Activated B cell treated with CpG ODN at 0.5 μM for 24 hours (primary cell): ENCODE measurements at regions of chr11 and their contacts with region 1.

Region 1: GRCh38 chr11:18768472-18768901 is 23.1 kb downstream of the PTPN5 start:
- DNase-seq: no peak
- ATAC-seq: peak; percentile 50
- H3K4me3 Mint-ChIP-seq: no peak overlapping the region
- H3K27ac Mint-ChIP-seq: no peak overlapping the region
- H3K4me1 Mint-ChIP-seq: peaks cover 7% of the 10 kb centered on the region
- H3K27me3 Mint-ChIP-seq: peaks cover 14% of the 10 kb centered on the region
- CTCF ChIP-seq: no peak

Region 2: GRCh38 chr11:17991783-17992433 is 776.6 kb before region 1 on chr11:
- CTCF ChIA-PET with region 1: no interaction called
- POLR2A ChIA-PET with region 1: no interaction called
- intact Hi-C with region 1: loop called (anchors 1 kb)
- DNase-seq: no peak
- ATAC-seq: peak; percentile 74
- H3K4me3 Mint-ChIP-seq: no peak overlapping the region
- H3K27ac Mint-ChIP-seq: no peak overlapping the region
- H3K4me1 Mint-ChIP-seq: no peaks in the 10 kb centered on the region
- H3K27me3 Mint-ChIP-seq: no peaks in the 10 kb centered on the region
- CTCF ChIP-seq: peak; percentile 99

Region 3: GRCh38 chr11:18115360-18116127 is 652.9 kb before region 1 on chr11:
- CTCF ChIA-PET with region 1: interaction called, 14 read pairs
- POLR2A ChIA-PET with region 1: no interaction called
- intact Hi-C with region 1: loop called (anchors 1 kb)
- DNase-seq: peak; percentile 36
- ATAC-seq: peak; percentile 93
- H3K4me3 Mint-ChIP-seq: no peak overlapping the region
- H3K27ac Mint-ChIP-seq: no peak overlapping the region
- H3K4me1 Mint-ChIP-seq: peaks cover 4% of the 10 kb centered on the region
- H3K27me3 Mint-ChIP-seq: peaks cover 14% of the 10 kb centered on the region
- CTCF ChIP-seq: peak; percentile 64

Region 4: DNA sequence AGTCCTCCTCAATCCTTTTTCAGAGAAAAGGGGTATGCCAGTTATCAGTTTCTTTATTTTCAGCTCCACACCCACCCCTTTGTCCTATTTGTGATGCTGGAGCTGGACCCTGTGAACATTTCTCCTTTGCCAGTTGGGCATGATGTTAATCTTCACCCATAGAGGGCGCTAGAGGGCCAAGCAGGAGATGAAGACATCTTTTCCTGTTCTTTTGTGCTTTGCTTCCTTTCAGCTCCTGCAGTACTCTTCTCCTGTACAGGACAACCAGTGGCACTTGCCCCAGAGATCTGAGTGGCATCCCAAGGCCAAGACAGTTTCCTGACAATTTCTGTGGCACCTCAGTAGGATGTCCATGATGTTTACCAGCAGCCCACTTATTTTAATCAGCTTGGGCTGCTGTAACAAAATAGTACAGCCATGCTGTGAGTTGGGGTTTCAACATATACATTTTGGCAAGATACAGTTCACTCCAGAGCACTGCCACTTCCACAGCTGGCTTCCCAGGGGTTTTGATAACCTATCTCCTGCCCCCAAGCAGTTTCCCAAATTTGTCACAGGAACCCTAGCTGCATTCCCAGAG is 524.6 kb before region 1 on chr11:
- CTCF ChIA-PET with region 1: no interaction called
- POLR2A ChIA-PET with region 1: no interaction called
- intact Hi-C with region 1: loop called (anchors 1 kb)
- DNase-seq: no peak
- ATAC-seq: no peak
- H3K4me3 Mint-ChIP-seq: no peak overlapping the region
- H3K27ac Mint-ChIP-seq: no peak overlapping the region
- H3K4me1 Mint-ChIP-seq: peaks cover 15% of the 10 kb centered on the region
- H3K27me3 Mint-ChIP-seq: peaks cover 16% of the 10 kb centered on the region
- CTCF ChIP-seq: no peak

Region 5: GRCh38 chr11:18540207-18541009 is 228.1 kb before region 1 on chr11:
- CTCF ChIA-PET with region 1: interaction called, 16 read pairs
- POLR2A ChIA-PET with region 1: no interaction called
- intact Hi-C with region 1: loop called (anchors 1 kb)
- DNase-seq: no peak
- ATAC-seq: peak; percentile 21
- H3K4me3 Mint-ChIP-seq: no peak overlapping the region
- H3K27ac Mint-ChIP-seq: no peak overlapping the region
- H3K4me1 Mint-ChIP-seq: no peaks in the 10 kb centered on the region
- H3K27me3 Mint-ChIP-seq: no peaks in the 10 kb centered on the region
- CTCF ChIP-seq: no peak

Region 6: GRCh38 chr11:18749697-18750319 is 18.7 kb before region 1 on chr11:
- CTCF ChIA-PET with region 1: no interaction called
- POLR2A ChIA-PET with region 1: no interaction called
- intact Hi-C with region 1: no loop called
- DNase-seq: no peak
- ATAC-seq: no peak
- H3K4me3 Mint-ChIP-seq: no peak overlapping the region
- H3K27ac Mint-ChIP-seq: no peak overlapping the region
- H3K4me1 Mint-ChIP-seq: no peaks in the 10 kb centered on the region
- H3K27me3 Mint-ChIP-seq: peaks cover 22% of the 10 kb centered on the region
- CTCF ChIP-seq: no peak